ENCODE measurements at regions of chr5 and their contacts with region 1.

Region 1: DNA sequence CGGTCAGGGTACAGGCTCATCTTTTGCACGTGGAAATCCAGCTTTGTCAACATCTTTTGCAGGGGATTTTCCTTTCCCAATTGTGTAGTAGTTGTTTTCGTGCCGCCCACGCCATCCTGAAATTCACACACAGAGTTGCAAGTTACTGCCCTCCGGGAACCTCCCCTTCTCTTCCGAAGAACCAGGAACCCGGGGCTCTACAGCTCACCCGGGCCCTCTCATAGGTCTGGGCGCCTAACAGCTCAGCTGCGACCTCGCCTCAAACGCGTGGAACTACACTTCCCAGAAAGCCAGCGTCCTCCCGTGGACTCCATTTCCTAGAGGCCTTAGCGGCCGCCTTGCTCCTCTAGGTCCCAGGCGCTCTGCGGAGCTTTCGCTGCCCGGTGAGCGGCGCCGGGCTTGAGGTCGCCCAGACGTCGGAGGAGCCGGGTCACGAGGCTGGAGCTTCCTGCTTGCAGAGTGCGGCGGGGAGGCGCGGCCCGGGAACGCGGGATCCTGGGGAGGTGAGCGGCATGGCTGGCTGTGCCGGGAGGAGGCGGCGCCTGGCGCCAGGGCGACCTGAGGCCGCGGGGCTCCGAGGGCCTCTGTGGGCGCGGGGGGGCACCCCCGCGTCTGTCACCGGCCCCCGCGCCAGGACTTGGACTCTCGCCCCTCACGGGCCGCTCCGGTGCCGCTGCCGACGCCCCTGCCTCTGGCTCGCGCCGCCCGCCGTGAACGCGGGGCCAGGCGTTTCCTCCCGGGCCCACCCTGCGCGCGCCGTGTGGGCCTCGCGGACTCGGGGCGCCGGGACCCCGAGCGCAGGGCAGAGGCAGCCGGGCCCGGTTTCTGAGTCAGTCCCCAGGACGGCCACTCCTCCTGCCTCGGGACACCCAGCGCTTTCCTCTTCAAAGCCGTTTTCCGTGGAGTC is at the start of gene ZNF354B:
- DNase-seq: peak; percentile 91
- H3K4me3 ChIP-seq: peak within 1 kb of the TSS; percentile 73 to 75
- H3K27ac ChIP-seq: peak within 1 kb of the TSS; percentile 62 to 70; a peak in 3 of 4 replicates
- H3K4me1 ChIP-seq: peaks cover 0 to 6% of the 10 kb centered on the region in 2 experiments; a peak in 1 of 4 replicates
- H3K27me3 ChIP-seq: no peaks in the 10 kb centered on the region
- CTCF ChIP-seq: no peak
- EP300 ChIP-seq: no peak
- RAD21 ChIP-seq: 0 out of 2 replicates have a peak, but pooled peaks have one; percentile 5
- polyA plus RNA-seq, gene ZNF354B: 7.1 and 10.7 TPM in 2 replicates

Region 2: DNA sequence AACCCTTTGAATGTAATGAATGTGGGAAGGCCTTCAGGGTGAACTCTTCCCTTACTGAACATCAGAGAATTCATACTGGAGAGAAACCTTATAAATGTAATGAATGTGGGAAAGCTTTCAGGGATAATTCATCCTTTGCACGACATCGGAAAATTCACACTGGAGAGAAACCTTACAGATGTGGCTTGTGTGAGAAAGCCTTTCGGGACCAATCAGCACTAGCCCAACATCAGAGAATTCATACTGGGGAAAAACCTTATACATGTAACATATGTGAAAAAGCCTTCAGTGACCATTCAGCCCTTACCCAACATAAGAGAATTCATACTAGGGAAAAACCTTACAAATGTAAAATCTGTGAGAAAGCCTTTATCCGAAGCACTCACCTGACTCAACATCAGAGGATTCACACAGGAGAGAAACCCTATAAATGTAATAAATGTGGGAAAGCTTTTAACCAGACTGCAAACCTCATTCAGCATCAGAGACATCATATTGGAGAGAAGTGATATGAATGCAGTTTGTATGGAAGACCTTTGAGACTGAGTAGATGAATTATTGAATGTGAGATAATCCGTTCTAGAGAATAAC is 105.7 kb after region 1 on chr5:
- CTCF ChIA-PET with region 1: no interaction called
- POLR2A ChIA-PET with region 1: no interaction called
- DNase-seq: no peak
- H3K4me3 ChIP-seq: no peak overlapping the region
- H3K27ac ChIP-seq: no peak overlapping the region
- H3K4me1 ChIP-seq: no peaks in the 10 kb centered on the region
- H3K27me3 ChIP-seq: no peaks in the 10 kb centered on the region
- CTCF ChIP-seq: no peak
- EP300 ChIP-seq: no peak
- RAD21 ChIP-seq: no peak

Region 3: GRCh38 chr5:179060116-179061008 is 200.5 kb after region 1 on chr5 and contains the start of gene ZNF354C:
- CTCF ChIA-PET with region 1: no interaction called
- POLR2A ChIA-PET with region 1: interaction called, 11 read pairs
- DNase-seq: peak; percentile 95
- H3K4me3 ChIP-seq: peak within 1 kb of the TSS; percentile 72 to 73
- H3K27ac ChIP-seq: peak within 1 kb of the TSS; percentile 11 to 78; a peak in 3 of 4 replicates
- H3K4me1 ChIP-seq: peaks cover 0 to 8% of the 10 kb centered on the region in 2 experiments; a peak in 2 of 4 replicates
- H3K27me3 ChIP-seq: no peaks in the 10 kb centered on the region
- CTCF ChIP-seq: no peak
- EP300 ChIP-seq: no peak
- RAD21 ChIP-seq: no peak
- polyA plus RNA-seq, gene ZNF354C: 1.1 and 1.5 TPM in 2 replicates